A549 (cell line): ENCODE measurements at regions of chr15 and their contacts with region 1.

Region 1: DNA sequence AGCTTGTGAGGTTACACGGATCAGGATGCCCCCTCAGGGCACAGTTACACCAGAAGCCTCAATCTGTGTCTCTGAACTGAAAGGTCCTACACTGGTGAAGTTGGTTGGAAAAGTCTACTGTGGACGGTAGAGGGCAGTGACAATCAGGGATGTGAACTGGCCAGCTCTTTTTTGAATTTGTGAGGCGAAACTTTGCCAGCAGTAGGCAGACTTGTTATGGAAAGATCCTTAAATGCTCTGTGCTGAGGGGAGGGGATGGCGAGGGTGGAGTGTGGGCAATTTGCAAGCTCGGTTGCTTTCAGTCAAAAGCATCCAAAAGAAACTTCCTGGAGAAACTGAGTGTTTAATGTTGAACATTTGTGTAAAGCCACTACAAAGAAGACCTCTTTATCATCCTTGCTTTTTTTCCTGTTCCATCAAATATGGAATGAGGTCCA is 127.4 kb upstream of the ABHD17C start:
- DNase-seq: peak; percentile 84 to 89
- ATAC-seq: peak; percentile 89 to 97
- H3K4me3 ChIP-seq: no peak overlapping the region
- H3K27ac ChIP-seq: no peak overlapping the region
- H3K4me1 ChIP-seq: no peaks in the 10 kb centered on the region
- CTCF ChIP-seq: peak; percentile 99
- EP300 ChIP-seq: no peak
- POLR2A ChIP-seq: no peak
- RAD21 ChIP-seq: peak; percentile 98

Region 2: DNA sequence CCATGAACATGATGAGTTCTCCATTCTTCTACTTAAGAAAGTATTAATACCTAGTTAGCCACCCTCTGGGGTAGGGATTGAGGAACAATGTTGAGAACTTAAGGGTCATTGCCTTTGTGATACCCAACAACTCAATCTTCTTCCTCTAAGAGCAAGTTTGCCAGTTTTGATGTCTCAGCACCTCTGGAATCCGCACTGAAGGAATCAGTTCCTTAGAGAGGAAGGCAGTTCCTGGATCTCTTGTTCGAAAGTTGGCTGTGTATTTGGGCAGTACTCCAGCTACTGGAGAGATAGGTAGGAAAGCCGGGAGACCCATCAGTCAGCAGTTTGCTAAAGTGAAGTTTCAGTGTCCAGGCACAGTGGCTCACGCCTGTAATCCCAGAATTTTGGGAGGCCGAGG is 635.3 kb before region 1 on chr15:
- CTCF ChIA-PET with region 1: no interaction called
- POLR2A ChIA-PET with region 1: no interaction called
- DNase-seq: no peak
- ATAC-seq: no peak
- H3K4me3 ChIP-seq: no peak overlapping the region
- H3K27ac ChIP-seq: no peak overlapping the region
- H3K4me1 ChIP-seq: no peaks in the 10 kb centered on the region
- CTCF ChIP-seq: no peak
- EP300 ChIP-seq: no peak
- POLR2A ChIP-seq: no peak
- RAD21 ChIP-seq: no peak

Region 3: GRCh38 chr15:80475572-80475971 is 92.2 kb before region 1 on chr15:
- CTCF ChIA-PET with region 1: interaction called, 27 read pairs
- POLR2A ChIA-PET with region 1: no interaction called
- DNase-seq: no peak
- ATAC-seq: no peak
- H3K4me3 ChIP-seq: no peak overlapping the region
- H3K27ac ChIP-seq: no peak overlapping the region
- H3K4me1 ChIP-seq: no peaks in the 10 kb centered on the region
- CTCF ChIP-seq: no peak
- EP300 ChIP-seq: no peak
- POLR2A ChIP-seq: no peak
- RAD21 ChIP-seq: peak in 1 of 2 experiments; percentile 35; a peak in 1 of 5 replicates

Region 4: GRCh38 chr15:80580106-80580505 is 12.4 kb after region 1 on chr15:
- CTCF ChIA-PET with region 1: interaction called, 69 read pairs
- POLR2A ChIA-PET with region 1: no interaction called
- DNase-seq: peak in 1 of 2 experiments; percentile 37
- ATAC-seq: peak; percentile 22 to 36; a peak in 3 of 6 replicates
- H3K4me3 ChIP-seq: no peak overlapping the region
- H3K27ac ChIP-seq: peak overlapping the region in 1 of 2 experiments; percentile 38; a peak in 1 of 6 replicates
- H3K4me1 ChIP-seq: peaks cover 27% of the 10 kb centered on the region
- CTCF ChIP-seq: no peak
- EP300 ChIP-seq: no peak
- POLR2A ChIP-seq: no peak
- RAD21 ChIP-seq: no peak

Region 5: DNA sequence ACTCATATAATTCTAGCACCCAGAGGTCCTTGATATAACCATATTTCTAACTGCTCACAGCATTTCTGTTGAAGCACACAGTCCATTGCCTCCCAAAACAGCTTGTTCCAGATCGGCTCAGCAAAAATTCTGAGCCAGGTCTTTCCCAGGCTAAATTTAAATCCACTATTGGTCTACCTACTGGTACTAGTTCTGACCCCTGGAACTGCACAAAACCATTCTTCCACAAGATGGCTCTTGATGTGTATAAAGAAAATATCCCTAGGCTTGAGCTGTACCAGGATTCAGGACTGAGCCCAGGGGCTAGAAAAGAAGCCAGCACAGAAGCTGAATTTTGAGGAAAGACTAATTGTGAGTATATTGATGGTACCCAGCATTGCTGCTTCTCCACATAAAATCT is 51.9 kb after region 1 on chr15:
- CTCF ChIA-PET with region 1: interaction called, 11 read pairs
- POLR2A ChIA-PET with region 1: no interaction called
- DNase-seq: no peak
- ATAC-seq: peak; percentile 20 to 65; a peak in 4 of 6 replicates
- H3K4me3 ChIP-seq: no peak overlapping the region
- H3K27ac ChIP-seq: no peak overlapping the region
- H3K4me1 ChIP-seq: peaks cover 11% of the 10 kb centered on the region; the same call in 2 of the 3 replicates
- CTCF ChIP-seq: no peak; the same call in 2 of the 3 replicates
- EP300 ChIP-seq: no peak
- POLR2A ChIP-seq: no peak
- RAD21 ChIP-seq: 0 out of 5 replicates have a peak, but pooled peaks of 1 of the 2 experiments have one; percentile 13

Region 6: DNA sequence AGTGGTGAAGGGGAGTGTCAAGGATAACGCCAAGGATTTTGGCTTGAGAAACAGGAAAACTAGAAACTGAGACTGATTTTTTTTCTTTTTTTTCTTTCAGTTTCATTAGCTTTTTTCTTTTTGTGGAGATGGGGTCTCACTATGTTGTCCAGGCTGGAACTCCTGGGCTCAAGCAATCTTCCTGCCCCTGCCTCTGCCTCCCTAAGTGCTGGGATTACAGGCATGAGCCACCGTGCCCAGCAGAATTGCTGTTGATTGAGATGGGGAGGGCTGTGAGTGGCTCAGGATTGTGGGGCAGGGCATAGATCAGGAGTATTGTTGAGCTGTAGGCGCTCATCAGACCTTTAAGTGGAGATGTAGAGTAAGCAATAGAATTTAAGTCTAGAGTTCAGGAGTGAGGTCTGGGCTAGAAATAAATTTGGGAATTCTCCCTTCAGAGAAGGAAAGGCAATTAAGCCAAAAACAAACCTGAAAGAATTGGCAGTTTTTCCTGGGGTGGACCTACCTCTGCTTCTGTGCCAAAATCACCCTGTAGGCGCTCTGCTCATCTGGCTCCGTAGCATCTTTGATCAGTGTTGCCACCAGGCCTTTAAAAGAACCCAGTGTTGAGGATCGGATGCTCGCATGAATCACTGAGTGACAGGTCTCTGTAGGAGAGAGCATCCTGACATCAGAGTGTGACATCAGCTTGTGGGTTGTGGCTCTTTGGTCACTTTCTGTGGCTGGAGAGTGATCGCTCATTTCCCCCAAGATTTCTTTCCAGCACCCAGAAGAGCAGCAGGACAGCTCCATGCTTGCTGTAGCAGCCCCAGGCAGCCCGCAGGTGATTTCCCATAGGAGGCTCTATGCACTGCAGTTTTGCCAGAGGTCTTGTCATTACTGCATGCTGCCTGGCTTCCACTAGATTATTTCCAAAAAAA is 143.2 kb after region 1 on chr15:
- CTCF ChIA-PET with region 1: interaction called, 25 read pairs
- POLR2A ChIA-PET with region 1: no interaction called
- DNase-seq: no peak
- ATAC-seq: peak in 1 of 2 experiments; percentile 38; a peak in 1 of 6 replicates
- H3K4me3 ChIP-seq: no peak overlapping the region
- H3K27ac ChIP-seq: no peak overlapping the region
- H3K4me1 ChIP-seq: no peaks in the 10 kb centered on the region
- CTCF ChIP-seq: no peak
- EP300 ChIP-seq: no peak
- POLR2A ChIP-seq: no peak
- RAD21 ChIP-seq: no peak

Region 7: GRCh38 chr15:80776420-80777045 is 208.8 kb after region 1 on chr15:
- CTCF ChIA-PET with region 1: interaction called, 362 read pairs
- POLR2A ChIA-PET with region 1: interaction called, 15 read pairs
- DNase-seq: peak; percentile 83 to 86
- ATAC-seq: peak in 1 of 2 experiments; percentile 31; a peak in 3 of 6 replicates
- H3K4me3 ChIP-seq: no peak overlapping the region
- H3K27ac ChIP-seq: 0 out of 6 replicates have a peak overlapping the region, but pooled peaks of 1 of the 2 experiments have one; percentile 42
- H3K4me1 ChIP-seq: peaks cover 12% of the 10 kb centered on the region; the same call in 2 of the 3 replicates
- CTCF ChIP-seq: peak; percentile 97
- EP300 ChIP-seq: no peak
- POLR2A ChIP-seq: no peak
- RAD21 ChIP-seq: peak; percentile 93 to 98

Region 8: DNA sequence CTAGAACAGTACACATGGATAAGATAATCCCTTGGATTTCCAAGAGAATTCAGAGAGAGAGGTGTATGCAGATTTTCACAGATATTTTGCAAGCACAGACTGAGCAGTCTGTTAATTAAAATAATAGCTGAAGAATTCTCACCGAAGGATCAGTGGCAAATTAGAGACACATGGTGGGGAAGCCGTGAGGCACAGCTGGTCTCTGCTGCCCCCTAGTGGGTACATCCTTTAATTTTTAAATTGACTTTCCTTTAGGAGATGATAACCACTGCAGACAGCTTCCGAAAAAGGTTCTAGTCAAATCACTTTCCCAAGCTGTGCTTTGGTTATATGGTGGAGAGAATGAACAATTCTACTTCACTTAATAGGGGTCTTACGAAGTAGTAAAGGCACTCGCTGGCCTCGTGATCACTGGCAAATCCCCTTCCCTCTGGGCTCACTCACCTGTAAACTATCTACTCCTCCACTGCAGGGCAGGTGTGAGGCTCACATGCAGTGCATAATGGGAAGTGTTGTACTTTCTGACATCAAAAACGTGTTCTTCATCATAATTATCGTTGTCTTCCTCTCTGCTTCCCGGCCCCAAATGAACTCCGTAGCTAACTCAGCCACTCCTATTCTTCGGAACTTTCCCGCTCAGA is 402.4 kb after region 1 on chr15:
- CTCF ChIA-PET with region 1: interaction called, 83 read pairs
- POLR2A ChIA-PET with region 1: no interaction called
- DNase-seq: peak; percentile 59 to 79
- ATAC-seq: peak; percentile 83 to 93
- H3K4me3 ChIP-seq: no peak overlapping the region
- H3K27ac ChIP-seq: no peak overlapping the region
- H3K4me1 ChIP-seq: no peaks in the 10 kb centered on the region
- CTCF ChIP-seq: peak; percentile 98
- EP300 ChIP-seq: no peak
- POLR2A ChIP-seq: no peak
- RAD21 ChIP-seq: peak; percentile 98 to 99